Posterior vena cava (tissue), 2 donors: ENCODE measurements at regions of chr14 and their contacts with region 1.

Region 1: DNA sequence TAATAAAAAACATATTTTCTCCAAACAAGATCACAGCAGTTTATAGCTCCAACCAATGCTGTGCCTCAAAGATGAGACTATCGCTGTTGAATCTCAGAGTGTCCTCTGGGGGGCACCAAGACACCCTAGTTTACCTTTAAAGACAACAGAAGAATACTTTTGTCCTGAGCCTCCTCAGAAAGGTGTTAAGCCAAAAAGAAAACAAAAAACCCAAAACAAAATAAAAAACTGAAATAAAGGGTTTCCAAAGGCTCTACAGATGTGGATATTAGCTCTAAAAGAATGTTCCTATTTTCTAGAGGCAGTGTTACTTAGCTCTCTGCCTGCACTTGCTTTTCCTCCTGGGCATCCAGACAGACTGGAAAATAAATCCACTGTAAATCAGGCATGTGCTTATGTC is 86.9 kb upstream of the TTC7B start:
- DNase-seq: no peak

Region 2: GRCh38 chr14:90924621-90925345 is 21.7 kb after region 1 on chr14:
- intact Hi-C with region 1: no loop called
- DNase-seq: no peak

Region 3: DNA sequence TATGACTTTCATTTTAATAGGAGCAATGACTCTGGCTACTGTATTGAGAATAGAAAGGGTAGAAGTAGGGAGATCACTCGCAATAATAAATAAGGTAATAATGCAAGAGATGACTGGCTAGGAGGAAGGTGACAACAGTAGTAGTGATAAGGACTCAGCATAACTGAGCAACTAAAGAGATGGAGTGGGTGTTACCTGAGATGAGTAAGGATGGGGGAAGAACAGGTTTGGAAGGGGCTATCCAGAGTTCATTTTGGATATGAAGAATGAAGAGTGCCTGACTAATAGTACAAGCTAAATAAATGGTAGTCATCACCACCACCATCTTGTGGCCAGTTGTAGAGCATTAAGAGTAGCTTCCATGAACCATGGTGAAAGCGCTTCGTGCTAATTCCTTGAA is 56.2 kb after region 1 on chr14:
- intact Hi-C with region 1: no loop called
- DNase-seq: no peak

Region 4: DNA sequence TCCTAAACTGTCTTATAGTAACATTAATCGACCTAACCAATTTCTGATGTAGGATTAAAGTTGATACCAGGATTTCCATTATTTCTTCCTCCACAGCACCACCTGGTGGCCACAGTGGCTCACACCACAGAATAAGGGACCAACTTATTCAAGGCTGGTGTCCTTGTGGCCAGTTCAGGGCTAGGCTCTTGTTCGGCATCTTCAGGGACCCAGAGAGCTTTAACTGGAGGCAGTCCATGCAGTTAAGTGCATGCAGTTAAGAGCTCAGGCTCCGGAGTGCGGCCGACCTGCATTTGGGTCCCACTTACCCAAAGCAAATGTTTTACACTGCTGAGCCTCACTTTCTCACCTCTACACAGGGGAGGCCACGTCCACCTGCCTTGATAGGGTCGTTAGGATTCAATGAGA is 383.4 kb after region 1 on chr14:
- intact Hi-C with region 1: loop called in 1 of 2 experiments (anchors 5 kb)
- DNase-seq: peak; percentile 92

Region 5: DNA sequence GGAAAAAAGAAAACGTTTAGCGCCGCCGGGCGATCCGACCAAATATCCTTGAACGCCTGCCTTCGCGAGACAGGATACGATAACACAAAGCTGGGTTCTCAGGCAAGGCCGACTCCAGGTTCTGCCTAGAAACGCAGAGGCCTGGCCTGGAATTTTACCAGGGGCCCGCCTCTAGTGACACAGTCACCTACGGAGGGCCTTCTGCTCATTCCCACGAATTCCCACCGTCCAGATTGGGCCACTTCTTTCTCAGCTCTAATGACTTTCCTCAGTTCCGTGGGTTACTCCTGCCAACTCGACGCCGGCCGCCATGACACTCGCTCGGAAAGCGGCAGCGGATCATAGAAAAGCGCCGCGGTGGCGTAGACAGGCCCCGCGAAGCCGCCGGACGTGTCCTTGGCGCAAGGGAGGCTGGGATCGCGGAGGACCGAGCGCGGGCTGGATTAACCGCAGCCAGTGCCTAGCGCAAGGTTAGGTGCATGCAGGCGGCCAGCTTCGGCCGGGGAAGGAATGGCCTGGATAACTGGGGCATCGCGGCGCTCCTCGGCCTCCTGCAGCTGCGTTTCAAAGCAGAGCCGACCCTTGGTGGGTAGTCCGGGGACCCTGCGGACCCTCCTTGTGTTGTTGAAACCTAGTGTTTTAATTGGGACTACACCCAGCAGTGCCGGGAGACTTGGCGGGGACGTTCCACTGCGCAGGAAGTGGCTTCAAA is 1136.8 kb after region 1 on chr14 and contains the start of gene TRIP11:
- intact Hi-C with region 1: no loop called
- DNase-seq: peak; percentile 99
- total RNA-seq, gene TRIP11: 51.2 to 53.2 TPM